ENCODE measurements at regions of chr2 and their contacts with region 1.

Region 1: GRCh38 chr2:109722026-109722425 is 72.1 kb upstream of the RGPD5 start:
- DNase-seq: no peak
- H3K4me3 ChIP-seq: no peak overlapping the region
- CTCF ChIP-seq: no peak

Region 2: DNA sequence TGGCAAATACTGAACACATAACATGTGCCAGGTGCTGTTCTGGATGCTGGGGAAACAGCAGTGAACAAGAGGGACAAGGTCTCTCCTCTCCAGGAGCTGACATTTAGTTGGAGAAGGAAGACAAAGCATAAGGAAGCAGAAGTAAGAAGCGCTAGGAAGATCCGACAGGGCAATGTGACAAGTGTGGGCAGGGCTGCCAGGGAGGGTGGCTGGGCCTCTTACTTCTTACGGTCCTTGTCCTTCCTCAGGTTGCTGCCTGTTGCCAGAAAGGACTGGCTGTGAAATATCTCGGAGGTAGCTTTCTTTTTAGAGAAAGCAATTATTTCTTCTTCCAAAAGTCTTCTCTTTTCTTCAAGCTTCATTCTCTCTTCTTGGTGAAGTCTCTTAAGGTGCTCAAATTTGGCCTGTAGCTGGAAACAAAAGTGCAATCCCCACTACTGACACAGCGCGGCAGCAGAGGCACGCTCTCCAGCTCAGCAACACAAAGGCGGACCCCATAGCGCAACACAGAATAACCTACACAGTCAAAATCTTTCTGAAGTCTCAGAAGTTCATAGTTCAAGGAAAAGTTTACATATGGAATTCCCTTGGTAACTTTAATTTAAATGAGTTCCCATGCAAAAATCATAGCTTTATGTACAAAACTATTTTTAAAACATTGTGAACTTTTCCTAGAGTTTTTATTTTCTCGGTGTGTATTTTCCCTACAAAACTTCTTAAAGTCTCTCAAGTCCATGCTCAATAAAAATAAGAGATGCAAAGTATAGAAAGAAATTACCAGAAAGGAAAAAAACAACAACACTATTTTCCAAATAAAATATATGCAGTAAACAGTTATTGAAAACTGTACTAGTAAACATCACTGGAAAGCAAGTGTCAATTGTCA is 176.0 kb before region 1 on chr2:
- in situ Hi-C with region 1: loop called (anchors 10 kb)
- DNase-seq: peak; percentile 41
- H3K4me3 ChIP-seq: no peak overlapping the region
- CTCF ChIP-seq: peak; percentile 97